ENCODE measurements at regions of chr21 and their contacts with region 1.

Region 1: GRCh38 chr21:16145479-16145878 is 415.7 kb downstream of the USP25 start:
- DNase-seq: no peak
- ATAC-seq: no peak
- H3K4me3 ChIP-seq: no peak overlapping the region
- H3K4me3 Mint-ChIP-seq: no peak overlapping the region
- H3K27ac ChIP-seq: no peak overlapping the region
- H3K27ac Mint-ChIP-seq: no peak overlapping the region
- H3K4me1 ChIP-seq: no peaks in the 10 kb centered on the region
- H3K4me1 Mint-ChIP-seq: no peaks in the 10 kb centered on the region
- H3K27me3 ChIP-seq: no peaks in the 10 kb centered on the region
- H3K27me3 Mint-ChIP-seq: no peaks in the 10 kb centered on the region
- CTCF ChIP-seq: no peak

Region 2: GRCh38 chr21:15520811-15521636 is 624.5 kb before region 1 on chr21:
- CTCF ChIA-PET with region 1: no interaction called
- POLR2A ChIA-PET with region 1: no interaction called
- intact Hi-C with region 1: no loop called
- DNase-seq: peak in 2 of 9 experiments; percentile 8 to 31
- ATAC-seq: peak; percentile 38
- H3K4me3 ChIP-seq: no peak overlapping the region
- H3K4me3 Mint-ChIP-seq: no peak overlapping the region
- H3K27ac ChIP-seq: no peak overlapping the region
- H3K27ac Mint-ChIP-seq: peak overlapping the region; percentile 25
- H3K4me1 ChIP-seq: peaks cover 11% of the 10 kb centered on the region
- H3K4me1 Mint-ChIP-seq: peaks cover 15% of the 10 kb centered on the region
- H3K27me3 ChIP-seq: no peaks in the 10 kb centered on the region
- H3K27me3 Mint-ChIP-seq: no peaks in the 10 kb centered on the region
- CTCF ChIP-seq: peak; percentile 26

Region 3: GRCh38 chr21:16169102-16169511 is 23.6 kb after region 1 on chr21:
- CTCF ChIA-PET with region 1: no interaction called
- POLR2A ChIA-PET with region 1: no interaction called
- intact Hi-C with region 1: loop called in 1 of 2 experiments (anchors 1 kb)
- DNase-seq: no peak
- ATAC-seq: no peak
- H3K4me3 ChIP-seq: no peak overlapping the region
- H3K4me3 Mint-ChIP-seq: no peak overlapping the region
- H3K27ac ChIP-seq: no peak overlapping the region
- H3K27ac Mint-ChIP-seq: no peak overlapping the region
- H3K4me1 ChIP-seq: no peaks in the 10 kb centered on the region
- H3K4me1 Mint-ChIP-seq: no peaks in the 10 kb centered on the region
- H3K27me3 ChIP-seq: no peaks in the 10 kb centered on the region
- H3K27me3 Mint-ChIP-seq: peaks cover 3% of the 10 kb centered on the region
- CTCF ChIP-seq: no peak

Measured in CD8-positive, alpha-beta T cell (primary cell).